Adrenal gland (tissue), 19 donors: ENCODE measurements at regions of chr3 and their contacts with region 1.

Region 1: DNA sequence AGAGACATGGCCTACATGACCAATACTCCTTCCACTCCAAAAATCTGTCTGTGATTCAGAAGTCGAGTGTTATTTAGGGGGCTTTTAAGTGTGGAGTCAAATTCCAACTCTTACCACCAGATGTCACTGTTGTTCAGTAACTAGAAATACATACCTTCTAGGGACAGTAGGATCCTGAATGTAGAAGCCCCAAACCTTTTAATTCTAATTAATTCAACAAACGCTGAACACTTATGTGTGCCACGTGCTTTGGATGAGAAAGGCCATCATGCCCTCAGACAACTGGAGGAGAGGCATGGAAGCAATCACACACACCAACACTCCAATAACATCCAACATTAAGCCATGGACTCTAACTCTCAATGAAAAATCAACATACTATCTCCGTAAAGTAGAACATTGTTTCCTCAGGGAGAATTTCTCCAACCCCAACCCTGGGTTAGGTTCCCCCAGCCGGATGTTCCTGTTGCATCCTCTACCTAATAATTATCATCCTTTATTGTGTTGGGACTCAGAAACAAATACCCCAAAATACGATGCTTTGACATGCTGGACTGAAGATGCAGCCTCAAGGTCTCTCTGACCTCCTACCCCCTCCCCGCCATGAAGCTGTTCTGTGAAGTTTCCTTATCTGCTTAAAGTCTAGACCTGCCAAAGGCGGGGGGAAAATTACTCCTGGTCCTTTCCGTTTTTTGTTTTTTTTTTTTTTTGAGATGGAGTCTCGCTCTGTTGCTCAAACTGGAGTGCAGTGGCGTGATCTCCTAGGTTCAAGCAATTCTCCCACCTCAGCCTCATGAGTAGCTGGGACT is 8.0 kb upstream of the CCDC13 start:
- DNase-seq: peak in 2 of 7 donors; percentile 22 to 36
- H3K4me3 ChIP-seq: no peak overlapping the region
- H3K27ac ChIP-seq: peak overlapping the region in 2 of 5 donors; percentile 43 to 75
- H3K4me1 ChIP-seq: peaks cover 12 to 43% of the 10 kb centered on the region in 2 donors
- H3K27me3 ChIP-seq: no peaks in the 10 kb centered on the region
- CTCF ChIP-seq: peak; percentile 69 to 87 (median 80)
- POLR2A ChIP-seq: no peak

Region 2: GRCh38 chr3:42652611-42653302 is 128.3 kb before region 1 on chr3:
- intact Hi-C with region 1: no loop called
- DNase-seq: peak; percentile 40 to 83 (median 73)
- H3K4me3 ChIP-seq: peak overlapping the region in 2 of 4 donors; percentile 58 to 86
- H3K27ac ChIP-seq: peak overlapping the region in 4 of 5 donors; percentile 27 to 94 (median 80)
- H3K4me1 ChIP-seq: peaks cover 36 to 45% of the 10 kb centered on the region in 2 donors
- H3K27me3 ChIP-seq: no peaks in the 10 kb centered on the region
- CTCF ChIP-seq: no peak
- POLR2A ChIP-seq: peak; percentile 62 to 88

Region 3: DNA sequence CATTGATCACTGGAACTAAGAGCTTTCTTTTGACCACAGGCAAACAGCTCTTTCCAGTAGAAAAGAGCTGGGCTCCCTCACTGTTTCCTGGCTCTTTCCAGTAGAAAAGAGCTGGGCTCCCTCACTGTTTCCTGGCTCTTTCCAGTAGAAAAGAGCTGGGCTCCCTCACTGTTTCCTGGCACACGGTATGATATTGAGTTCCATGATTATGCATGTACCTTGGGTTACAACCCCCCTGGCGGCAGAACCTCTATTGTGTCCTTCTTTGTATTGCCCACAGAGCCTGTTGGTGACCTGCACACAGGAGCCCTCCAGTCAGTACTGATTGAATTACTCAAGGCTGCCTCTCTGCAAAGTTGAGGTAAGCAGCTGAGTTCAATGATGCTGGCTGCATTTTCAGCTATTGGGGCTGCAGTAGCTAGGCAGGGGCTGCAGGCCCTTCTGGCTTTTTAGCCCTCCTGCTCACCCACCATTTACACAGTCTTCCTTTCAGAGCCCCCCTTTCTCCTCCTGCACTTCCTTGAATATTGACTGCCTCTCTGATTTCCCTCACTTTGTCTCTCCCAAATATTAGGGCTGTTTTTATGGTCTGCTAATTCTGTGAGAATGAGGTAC is 38.4 kb after region 1 on chr3:
- intact Hi-C with region 1: no loop called
- DNase-seq: peak in 1 of 7 donors; percentile 74
- H3K4me3 ChIP-seq: no peak overlapping the region
- H3K27ac ChIP-seq: no peak overlapping the region
- H3K4me1 ChIP-seq: no peaks in the 10 kb centered on the region
- H3K27me3 ChIP-seq: no peaks in the 10 kb centered on the region
- CTCF ChIP-seq: no peak
- POLR2A ChIP-seq: no peak

Region 4: DNA sequence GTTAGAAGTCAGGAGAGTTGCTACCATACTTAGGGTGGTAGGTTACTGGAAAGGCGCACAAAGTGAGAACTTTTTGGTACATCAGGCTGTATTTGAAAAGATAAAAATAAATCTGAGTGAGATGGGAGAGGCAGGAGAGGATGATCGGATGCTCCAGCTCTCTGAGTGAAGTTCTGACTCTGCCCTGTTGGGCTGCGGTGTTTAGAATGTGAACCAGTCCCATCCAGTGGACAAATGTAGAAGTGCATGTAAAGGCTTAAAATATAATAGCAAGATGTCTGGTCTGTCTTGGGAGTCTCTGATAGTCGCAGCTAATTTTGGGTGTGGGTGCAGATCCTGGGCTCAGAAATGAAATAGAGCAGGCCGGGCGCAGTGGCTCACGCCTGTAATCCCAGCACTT is 58.5 kb after region 1 on chr3:
- intact Hi-C with region 1: loop called in 1 of 2 experiments (anchors 10 kb)
- DNase-seq: peak; percentile 31 to 82 (median 59)
- H3K4me3 ChIP-seq: no peak overlapping the region
- H3K27ac ChIP-seq: no peak overlapping the region
- H3K4me1 ChIP-seq: peaks cover 0 to 14% of the 10 kb centered on the region in 2 donors
- H3K27me3 ChIP-seq: no peaks in the 10 kb centered on the region
- CTCF ChIP-seq: peak; percentile 80 to 97 (median 90)
- POLR2A ChIP-seq: no peak

Region 5: DNA sequence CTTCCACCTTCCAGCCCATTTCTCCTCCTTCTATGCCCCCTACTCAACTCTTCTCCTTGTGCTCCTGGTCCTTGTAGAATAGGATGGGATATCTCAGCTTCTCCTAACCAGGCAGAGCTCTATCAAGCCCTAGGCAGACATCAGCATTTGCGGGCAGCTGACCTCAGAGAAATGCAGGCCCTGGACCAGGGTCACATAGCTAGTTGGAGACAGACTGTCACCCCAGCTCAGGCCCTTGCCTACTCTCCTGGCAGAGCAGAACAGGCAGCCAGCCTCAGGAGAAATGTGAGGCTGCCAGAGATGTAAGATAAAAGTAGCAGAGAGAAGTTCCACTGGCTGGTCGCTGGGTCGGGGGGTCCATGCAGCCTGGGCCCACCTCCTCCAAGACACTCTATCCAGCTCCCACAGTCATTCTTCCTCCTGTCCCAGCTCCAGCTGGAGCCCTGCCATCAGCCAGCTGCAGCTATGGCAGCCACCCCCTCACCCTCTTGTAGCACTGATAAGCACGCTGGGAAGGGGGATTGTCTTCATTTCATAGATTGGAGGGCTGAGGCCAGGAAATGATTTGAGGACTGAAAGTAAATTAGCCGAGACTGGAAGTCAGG is 90.6 kb after region 1 on chr3:
- intact Hi-C with region 1: loop called in 1 of 2 experiments (anchors 10 kb)
- DNase-seq: peak in 2 of 7 donors; percentile 22 to 25
- H3K4me3 ChIP-seq: no peak overlapping the region
- H3K27ac ChIP-seq: no peak overlapping the region
- H3K4me1 ChIP-seq: peaks cover 0 to 7% of the 10 kb centered on the region in 2 donors
- H3K27me3 ChIP-seq: no peaks in the 10 kb centered on the region
- CTCF ChIP-seq: no peak
- POLR2A ChIP-seq: no peak

Region 6: GRCh38 chr3:42946050-42946449 is 165.0 kb after region 1 on chr3:
- intact Hi-C with region 1: no loop called
- DNase-seq: no peak
- H3K4me3 ChIP-seq: no peak overlapping the region
- H3K27ac ChIP-seq: no peak overlapping the region
- H3K4me1 ChIP-seq: no peaks in the 10 kb centered on the region
- H3K27me3 ChIP-seq: no peaks in the 10 kb centered on the region
- CTCF ChIP-seq: no peak
- POLR2A ChIP-seq: no peak